ENCODE measurements at regions of chr20 and their contacts with region 1.

Region 1: DNA sequence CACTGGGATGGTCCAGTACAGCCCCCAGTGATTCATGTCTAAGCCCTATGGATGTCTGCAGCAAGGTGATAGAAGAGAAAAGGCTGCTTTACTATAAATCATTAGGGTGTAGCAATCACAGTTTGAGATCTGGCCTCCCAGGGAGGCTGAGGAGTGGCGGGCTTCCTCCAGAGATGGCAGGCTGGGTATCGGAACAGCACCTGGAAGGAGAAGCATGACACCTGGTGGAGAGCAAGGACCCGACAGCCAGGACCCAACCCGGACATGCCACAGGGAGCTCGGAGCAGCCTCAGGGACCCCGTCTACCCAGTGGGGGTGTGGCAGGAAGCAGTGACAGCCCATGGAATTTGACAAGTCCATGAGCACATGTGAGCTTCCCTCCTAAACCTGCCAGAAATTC is 114.8 kb upstream of the CD93 start:
- DNase-seq: peak; percentile 45
- H3K4me3 ChIP-seq: no peak overlapping the region
- H3K27ac ChIP-seq: no peak overlapping the region
- H3K4me1 ChIP-seq: no peaks in the 10 kb centered on the region
- H3K27me3 ChIP-seq: no peaks in the 10 kb centered on the region
- CTCF ChIP-seq: peak; percentile 62 to 84

Region 2: DNA sequence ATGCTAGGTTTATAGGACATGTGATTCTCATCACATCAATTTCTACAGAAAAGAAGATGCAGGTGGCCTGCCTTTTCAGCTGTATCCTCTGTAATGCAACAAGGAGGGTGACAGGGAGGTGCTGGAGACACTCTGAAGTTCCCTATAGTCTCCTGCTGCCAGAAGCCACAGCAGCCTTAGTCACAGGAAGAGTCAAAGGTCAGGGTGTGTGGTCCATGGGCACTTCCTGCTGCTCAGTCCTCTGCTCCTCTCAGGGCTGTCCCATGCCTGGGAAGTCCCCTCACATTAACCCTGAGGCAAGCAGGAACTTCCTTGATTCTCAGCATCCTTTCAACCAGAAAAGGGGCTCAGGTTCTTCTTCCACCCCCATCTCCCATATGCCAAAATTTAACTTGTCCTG is 471.7 kb before region 1 on chr20:
- CTCF ChIA-PET with region 1: no interaction called
- dilution Hi-C with region 1: no loop called
- in situ Hi-C with region 1: no loop called
- intact Hi-C with region 1: loop called (anchors 1 kb)
- DNase-seq: peak; percentile 35
- H3K4me3 ChIP-seq: no peak overlapping the region
- H3K27ac ChIP-seq: no peak overlapping the region
- H3K4me1 ChIP-seq: peaks cover 13% of the 10 kb centered on the region
- H3K27me3 ChIP-seq: no peaks in the 10 kb centered on the region
- CTCF ChIP-seq: no peak

Region 3: DNA sequence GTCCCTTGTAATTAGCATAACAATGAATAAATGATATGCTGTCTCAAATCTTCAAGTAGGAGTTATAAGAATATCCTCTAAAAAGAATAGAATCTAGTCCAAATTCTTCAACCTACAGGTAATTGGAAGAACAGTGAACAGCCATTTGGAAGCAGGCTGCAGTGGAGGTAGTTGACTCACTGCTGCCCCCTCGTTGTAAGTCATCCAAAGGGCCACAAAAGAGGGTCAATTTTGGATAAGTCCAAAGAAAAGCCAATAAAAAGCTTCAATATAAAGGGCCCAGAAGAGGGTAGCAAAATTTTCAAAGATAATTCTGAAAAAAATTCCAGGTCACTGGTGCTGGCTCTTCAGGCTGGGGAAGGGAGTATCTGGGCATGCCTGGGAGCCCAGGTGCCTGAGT is 226.6 kb before region 1 on chr20:
- CTCF ChIA-PET with region 1: no interaction called
- dilution Hi-C with region 1: no loop called
- in situ Hi-C with region 1: no loop called
- intact Hi-C with region 1: loop called (anchors 2 kb)
- DNase-seq: peak; percentile 20
- H3K4me3 ChIP-seq: no peak overlapping the region
- H3K27ac ChIP-seq: no peak overlapping the region
- H3K4me1 ChIP-seq: peaks cover 4% of the 10 kb centered on the region
- H3K27me3 ChIP-seq: no peaks in the 10 kb centered on the region
- CTCF ChIP-seq: peak; percentile 55 to 69

Region 4: GRCh38 chr20:23042270-23042669 is 158.6 kb before region 1 on chr20:
- CTCF ChIA-PET with region 1: interaction called, 11 read pairs
- dilution Hi-C with region 1: no loop called
- in situ Hi-C with region 1: no loop called
- intact Hi-C with region 1: no loop called
- DNase-seq: no peak
- H3K4me3 ChIP-seq: no peak overlapping the region
- H3K27ac ChIP-seq: no peak overlapping the region
- H3K4me1 ChIP-seq: peaks cover 7% of the 10 kb centered on the region
- H3K27me3 ChIP-seq: no peaks in the 10 kb centered on the region
- CTCF ChIP-seq: no peak

Region 5: GRCh38 chr20:23161968-23162696 is 38.8 kb before region 1 on chr20:
- CTCF ChIA-PET with region 1: no interaction called
- dilution Hi-C with region 1: no loop called
- in situ Hi-C with region 1: no loop called
- intact Hi-C with region 1: no loop called
- DNase-seq: no peak
- H3K4me3 ChIP-seq: no peak overlapping the region
- H3K27ac ChIP-seq: no peak overlapping the region
- H3K4me1 ChIP-seq: peaks cover 31% of the 10 kb centered on the region
- H3K27me3 ChIP-seq: no peaks in the 10 kb centered on the region
- CTCF ChIP-seq: no peak

Region 6: DNA sequence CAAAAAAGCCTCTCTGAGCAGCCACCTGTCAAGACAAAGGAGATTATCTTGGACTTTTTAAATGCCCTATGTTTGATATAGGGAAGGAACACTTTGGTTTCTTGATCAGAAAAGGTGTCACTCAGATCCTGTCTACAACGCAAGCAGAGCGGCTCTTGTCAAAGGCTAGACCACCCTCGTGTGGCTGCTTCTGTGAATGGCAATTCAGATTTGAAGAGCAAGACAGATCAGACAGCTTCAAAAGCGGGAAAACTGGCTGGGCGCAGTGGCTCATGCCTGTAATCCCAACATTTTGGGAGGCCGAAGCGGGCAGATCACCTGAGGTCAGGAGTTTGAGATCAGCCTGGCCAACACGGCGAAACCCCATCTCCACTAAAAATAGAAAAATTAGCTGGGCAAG is 139.6 kb after region 1 on chr20:
- CTCF ChIA-PET with region 1: no interaction called
- dilution Hi-C with region 1: no loop called
- in situ Hi-C with region 1: no loop called
- intact Hi-C with region 1: loop called (anchors 5 kb)
- DNase-seq: peak; percentile 49
- H3K4me3 ChIP-seq: no peak overlapping the region
- H3K27ac ChIP-seq: no peak overlapping the region
- H3K4me1 ChIP-seq: no peaks in the 10 kb centered on the region
- H3K27me3 ChIP-seq: no peaks in the 10 kb centered on the region
- CTCF ChIP-seq: peak; percentile 39 to 56

Measured in mammary epithelial cell (primary cell).